B cell (primary cell): ENCODE measurements at regions of chr17 and their contacts with region 1.

Region 1: DNA sequence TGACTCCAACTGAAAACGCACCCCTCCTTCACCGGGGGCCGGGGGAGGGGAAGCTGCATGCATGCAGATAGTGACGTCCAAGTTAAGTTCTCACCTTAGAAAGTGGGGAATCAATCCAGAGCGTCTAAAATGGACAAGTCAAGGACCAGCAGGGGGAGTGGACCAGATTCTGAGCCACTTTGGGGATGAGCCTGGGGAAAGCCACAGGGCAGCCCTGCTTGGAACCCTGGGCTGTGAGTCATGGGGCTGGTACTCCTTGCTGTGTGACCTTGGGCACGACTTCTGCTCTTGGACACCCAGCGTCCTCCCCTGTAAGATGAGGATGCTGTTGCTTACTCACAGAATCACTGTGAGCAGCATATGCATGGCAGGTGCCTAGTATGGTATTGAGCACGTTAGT is 9.1 kb downstream of the TNFRSF13B start:
- DNase-seq: no peak
- ATAC-seq: no peak
- H3K4me3 ChIP-seq: no peak overlapping the region
- H3K4me3 Mint-ChIP-seq: peak overlapping the region; percentile 4
- H3K27ac ChIP-seq: peak overlapping the region in 1 of 2 donors; percentile 70
- H3K27ac Mint-ChIP-seq: peak overlapping the region; percentile 87
- H3K4me1 ChIP-seq: peaks cover 30 to 48% of the 10 kb centered on the region in 2 donors
- H3K4me1 Mint-ChIP-seq: peaks cover 75% of the 10 kb centered on the region
- H3K27me3 ChIP-seq: no peaks in the 10 kb centered on the region
- H3K27me3 Mint-ChIP-seq: no peaks in the 10 kb centered on the region
- CTCF ChIP-seq: no peak

Region 2: DNA sequence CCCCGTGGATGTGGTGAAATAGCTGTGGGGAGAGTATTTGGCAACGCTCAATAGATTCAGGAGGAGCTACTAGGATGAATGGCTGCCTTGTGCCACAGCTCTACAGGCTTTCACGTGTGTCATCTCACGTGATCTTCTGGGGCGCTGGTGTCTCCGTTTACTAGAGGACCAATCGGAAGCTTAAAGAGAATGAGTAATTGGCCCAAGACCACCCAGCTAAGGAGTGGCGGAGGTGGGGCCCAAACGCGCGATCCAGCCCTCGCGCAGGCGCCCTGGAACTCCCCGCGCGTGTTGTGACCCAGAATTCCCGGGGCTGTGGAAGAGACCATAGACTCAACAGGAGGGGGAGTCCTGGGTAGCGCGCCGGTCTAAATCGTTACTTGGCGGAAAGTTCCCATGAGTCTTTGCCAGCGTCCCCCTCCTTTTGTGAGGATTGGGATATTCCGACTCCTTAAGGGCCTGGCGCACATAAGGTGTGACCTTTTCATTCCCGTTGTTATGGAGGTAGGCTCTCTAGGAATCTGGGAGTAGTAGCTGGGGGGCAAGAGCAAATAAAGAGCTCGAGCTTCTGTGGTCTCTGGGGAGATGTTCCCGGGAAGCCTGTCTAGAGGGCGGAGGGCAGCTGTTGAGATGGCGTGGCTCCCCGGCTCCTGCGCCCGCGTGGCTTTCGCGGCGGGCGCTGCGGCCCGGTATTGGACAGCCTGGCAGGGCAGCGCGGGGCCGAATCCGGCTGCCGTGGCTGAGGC is 524.1 kb before region 1 on chr17:
- CTCF ChIA-PET with region 1: no interaction called
- POLR2A ChIA-PET with region 1: no interaction called
- intact Hi-C with region 1: no loop called
- DNase-seq: peak; percentile 97
- ATAC-seq: peak; percentile 84
- H3K4me3 ChIP-seq: peak overlapping the region; percentile 87 to 94 (median 88)
- H3K4me3 Mint-ChIP-seq: peak overlapping the region; percentile 99
- H3K27ac ChIP-seq: peak overlapping the region; percentile 68 to 92
- H3K27ac Mint-ChIP-seq: peak overlapping the region; percentile 96
- H3K4me1 ChIP-seq: peaks cover 16 to 26% of the 10 kb centered on the region in 2 donors
- H3K4me1 Mint-ChIP-seq: peaks cover 43% of the 10 kb centered on the region
- H3K27me3 ChIP-seq: no peaks in the 10 kb centered on the region
- H3K27me3 Mint-ChIP-seq: no peaks in the 10 kb centered on the region
- CTCF ChIP-seq: no peak

Region 3: DNA sequence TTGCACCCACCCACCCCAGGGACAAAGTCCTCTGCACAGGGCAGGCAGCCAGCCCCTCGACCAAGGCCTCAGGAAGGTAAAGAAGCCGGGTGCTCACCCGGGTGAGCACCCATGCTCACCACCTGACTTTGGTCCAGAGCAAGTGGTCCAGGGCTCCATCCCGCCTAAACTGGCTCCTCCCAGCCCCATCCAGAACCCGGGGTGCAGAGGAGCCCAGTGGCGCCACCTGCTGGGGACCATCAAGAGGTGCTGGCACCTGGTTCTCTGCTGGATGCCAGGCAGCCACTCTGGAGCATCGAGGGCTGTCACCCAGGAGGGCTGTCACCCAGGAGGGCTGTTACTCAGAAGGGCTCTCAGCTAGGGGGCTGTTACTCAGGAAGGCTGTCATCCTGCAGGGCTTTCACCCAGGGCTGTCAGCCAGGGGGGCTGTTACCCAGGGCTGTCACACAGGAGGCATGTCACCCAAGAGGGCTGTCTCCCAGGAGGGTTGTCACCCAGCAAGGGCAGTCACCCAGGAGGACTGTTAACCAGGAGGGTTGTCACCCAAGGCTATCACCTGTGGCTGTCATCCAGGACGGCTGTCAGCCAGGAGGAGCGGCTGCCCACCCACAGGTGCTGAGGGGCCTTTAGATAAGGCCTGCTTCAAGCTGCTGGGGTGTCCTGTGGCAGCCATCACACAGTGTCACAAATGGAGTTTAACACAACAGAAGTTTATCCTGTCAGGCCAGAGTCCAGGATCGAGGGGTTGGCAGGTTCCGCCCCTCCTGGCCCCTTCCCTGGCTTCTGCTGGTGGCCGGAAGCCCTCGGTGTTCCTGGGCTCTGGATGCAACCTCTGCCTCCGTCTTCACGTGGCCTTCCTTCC is 89.4 kb before region 1 on chr17:
- CTCF ChIA-PET with region 1: no interaction called
- POLR2A ChIA-PET with region 1: no interaction called
- intact Hi-C with region 1: no loop called
- DNase-seq: peak; percentile 37
- ATAC-seq: peak; percentile 49
- H3K4me3 ChIP-seq: no peak overlapping the region
- H3K4me3 Mint-ChIP-seq: no peak overlapping the region
- H3K27ac ChIP-seq: no peak overlapping the region
- H3K27ac Mint-ChIP-seq: no peak overlapping the region
- H3K4me1 ChIP-seq: no peaks in the 10 kb centered on the region
- H3K4me1 Mint-ChIP-seq: no peaks in the 10 kb centered on the region
- H3K27me3 ChIP-seq: no peaks in the 10 kb centered on the region
- H3K27me3 Mint-ChIP-seq: no peaks in the 10 kb centered on the region
- CTCF ChIP-seq: peak; percentile 53

Region 4: GRCh38 chr17:16980813-16981731 is 18.3 kb after region 1 on chr17:
- CTCF ChIA-PET with region 1: interaction called, 317 read pairs
- POLR2A ChIA-PET with region 1: interaction called, 7 read pairs
- intact Hi-C with region 1: loop called (anchors 2 kb)
- DNase-seq: peak; percentile 82
- ATAC-seq: peak; percentile 82
- H3K4me3 ChIP-seq: peak overlapping the region in 2 of 5 experiments; percentile 19 to 23
- H3K4me3 Mint-ChIP-seq: peak overlapping the region; percentile 97
- H3K27ac ChIP-seq: peak overlapping the region; percentile 89 to 90
- H3K27ac Mint-ChIP-seq: peak overlapping the region; percentile 99
- H3K4me1 ChIP-seq: peaks cover 57 to 73% of the 10 kb centered on the region in 2 donors
- H3K4me1 Mint-ChIP-seq: peaks cover 84% of the 10 kb centered on the region
- H3K27me3 ChIP-seq: no peaks in the 10 kb centered on the region
- H3K27me3 Mint-ChIP-seq: no peaks in the 10 kb centered on the region
- CTCF ChIP-seq: no peak